Activated CD8-positive, alpha-beta memory T cell treated with anti-CD3 and anti-CD28 coated beads, Interleukin-2, amount 10 ng/mL, durations not matched to agents 7 days and 5 days (primary cell): ENCODE measurements at regions of chr20 and their contacts with region 1.

Region 1: GRCh38 chr20:57346477-57346876 is 4.6 kb upstream of the RAE1 start:
- DNase-seq: peak; percentile 81
- ATAC-seq: no peak
- H3K4me3 Mint-ChIP-seq: no peak overlapping the region
- H3K27ac Mint-ChIP-seq: no peak overlapping the region
- H3K4me1 Mint-ChIP-seq: peaks cover 5% of the 10 kb centered on the region
- H3K27me3 Mint-ChIP-seq: peaks cover 23% of the 10 kb centered on the region

Region 2: GRCh38 chr20:57089691-57090150 is 256.8 kb before region 1 on chr20:
- CTCF ChIA-PET with region 1: interaction called, 15 read pairs
- DNase-seq: peak; percentile 74
- ATAC-seq: peak; percentile 83
- H3K4me3 Mint-ChIP-seq: no peak overlapping the region
- H3K27ac Mint-ChIP-seq: no peak overlapping the region
- H3K4me1 Mint-ChIP-seq: peaks cover 3% of the 10 kb centered on the region
- H3K27me3 Mint-ChIP-seq: no peaks in the 10 kb centered on the region

Region 3: DNA sequence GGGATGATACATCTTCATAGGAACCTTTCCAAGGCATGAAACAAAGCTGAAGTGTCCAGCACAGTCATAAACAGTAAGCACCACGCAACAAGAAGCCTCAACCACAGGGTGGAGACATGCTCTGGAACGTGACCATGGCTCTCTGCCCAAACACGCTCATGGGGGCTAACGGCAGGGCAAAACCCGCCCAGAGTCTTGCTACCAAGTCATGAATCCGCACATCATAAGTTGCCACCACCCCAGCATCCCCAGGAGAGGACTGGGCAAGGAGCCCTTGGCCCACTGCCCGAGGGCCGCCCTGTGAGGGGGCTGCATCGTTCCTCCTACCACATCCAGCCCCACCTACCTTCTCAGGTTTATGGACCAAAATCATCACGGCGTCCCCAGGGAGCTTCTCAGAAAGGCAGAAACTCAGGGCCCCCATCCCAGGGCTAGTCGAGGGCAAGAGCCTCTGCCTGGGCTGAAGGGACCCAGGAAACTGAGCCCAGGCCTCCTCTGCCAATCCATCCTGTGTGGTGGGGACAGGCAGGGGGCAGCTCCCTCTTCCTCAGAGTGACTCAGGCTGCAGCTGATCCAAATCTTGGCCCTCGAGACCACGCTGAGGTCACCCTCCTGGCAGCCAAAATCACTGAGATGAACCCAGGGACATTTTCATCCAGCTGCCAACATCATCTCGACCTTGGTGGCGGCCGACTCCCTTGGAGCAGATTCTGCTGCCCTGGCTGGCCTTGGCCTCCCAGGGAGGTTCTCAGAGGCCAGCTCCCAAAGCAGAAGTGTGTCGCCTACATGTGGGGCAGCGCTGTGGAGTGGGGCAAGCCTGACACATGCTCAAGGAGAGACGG is 122.6 kb before region 1 on chr20:
- CTCF ChIA-PET with region 1: no interaction called
- DNase-seq: no peak
- ATAC-seq: no peak
- H3K4me3 Mint-ChIP-seq: no peak overlapping the region
- H3K27ac Mint-ChIP-seq: no peak overlapping the region
- H3K4me1 Mint-ChIP-seq: no peaks in the 10 kb centered on the region
- H3K27me3 Mint-ChIP-seq: no peaks in the 10 kb centered on the region